Endothelial cell of umbilical vein (primary cell): ENCODE measurements at regions of chr7 and their contacts with region 1.

Region 1: GRCh38 chr7:101146-102046 is 91.0 kb upstream of the FAM20C start:
- DNase-seq: peak; percentile 67
- H3K4me3 ChIP-seq: no peak overlapping the region
- H3K27ac ChIP-seq: no peak overlapping the region
- H3K4me1 ChIP-seq: peaks cover 26% of the 10 kb centered on the region
- H3K27me3 ChIP-seq: peaks cover 0 to 4% of the 10 kb centered on the region in 2 experiments
- CTCF ChIP-seq: no peak
- POLR2A ChIP-seq: no peak

Region 2: GRCh38 chr7:89232-90019 is 12.0 kb before region 1 on chr7:
- CTCF ChIA-PET with region 1: no interaction called
- POLR2A ChIA-PET with region 1: no interaction called
- dilution Hi-C with region 1: no loop called
- intact Hi-C with region 1: loop called (anchors 1 kb)
- DNase-seq: peak; percentile 84
- H3K4me3 ChIP-seq: no peak overlapping the region
- H3K27ac ChIP-seq: peak overlapping the region; percentile 37
- H3K4me1 ChIP-seq: peaks cover 24% of the 10 kb centered on the region
- H3K27me3 ChIP-seq: no peaks in the 10 kb centered on the region
- CTCF ChIP-seq: no peak
- POLR2A ChIP-seq: no peak

Region 3: DNA sequence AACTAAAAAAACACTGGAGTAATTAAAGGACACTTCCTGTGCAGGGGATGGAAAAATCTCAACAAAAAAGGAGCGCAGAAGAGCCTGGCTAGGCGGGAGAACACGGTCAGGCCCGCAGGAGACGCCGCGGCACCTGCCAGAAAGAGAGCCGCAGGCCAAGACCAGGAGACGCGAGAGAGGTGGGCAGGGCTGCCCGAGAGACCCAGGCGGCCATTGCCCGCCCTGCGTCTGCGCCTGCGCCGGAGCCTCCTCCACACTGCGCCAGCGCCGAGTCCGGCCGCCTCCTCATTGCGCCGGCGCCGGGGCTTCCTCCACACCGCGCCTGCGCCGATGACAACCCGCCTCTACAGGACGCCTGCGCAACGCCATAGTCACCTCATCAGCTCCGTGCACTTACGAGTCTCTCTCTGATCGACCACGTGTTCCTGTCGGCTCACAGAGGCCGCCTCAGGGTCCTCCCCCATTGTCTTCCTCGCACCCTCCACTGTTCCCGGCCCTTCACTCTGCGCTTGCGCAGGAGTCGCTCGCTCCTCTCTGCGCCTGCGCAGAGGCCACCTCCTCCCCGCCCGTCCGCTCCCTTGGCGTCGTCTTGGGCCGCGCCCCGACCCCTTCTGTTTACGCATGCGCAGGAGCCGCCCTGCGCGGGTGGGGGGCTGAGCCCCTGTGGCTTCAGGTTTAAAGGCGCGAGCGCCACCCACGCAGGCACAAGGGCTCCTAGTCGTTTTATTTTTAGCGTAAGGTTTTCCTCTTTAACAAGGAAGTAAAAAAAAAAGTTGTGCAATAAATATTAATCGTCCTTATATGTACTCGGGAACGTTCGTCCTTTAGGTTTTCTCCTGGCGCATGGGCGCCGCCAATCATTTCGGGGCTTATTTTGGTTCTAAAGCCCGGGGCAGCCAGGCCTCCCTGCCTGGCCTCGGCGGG is 47.8 kb after region 1 on chr7:
- CTCF ChIA-PET with region 1: no interaction called
- POLR2A ChIA-PET with region 1: no interaction called
- dilution Hi-C with region 1: no loop called
- intact Hi-C with region 1: loop called (anchors 2 kb)
- DNase-seq: peak; percentile 99
- H3K4me3 ChIP-seq: peak overlapping the region; percentile 42 to 80 (median 44)
- H3K27ac ChIP-seq: peak overlapping the region; percentile 79
- H3K4me1 ChIP-seq: peaks cover 9% of the 10 kb centered on the region
- H3K27me3 ChIP-seq: no peaks in the 10 kb centered on the region
- CTCF ChIP-seq: no peak
- POLR2A ChIP-seq: peak; percentile 98

Region 4: DNA sequence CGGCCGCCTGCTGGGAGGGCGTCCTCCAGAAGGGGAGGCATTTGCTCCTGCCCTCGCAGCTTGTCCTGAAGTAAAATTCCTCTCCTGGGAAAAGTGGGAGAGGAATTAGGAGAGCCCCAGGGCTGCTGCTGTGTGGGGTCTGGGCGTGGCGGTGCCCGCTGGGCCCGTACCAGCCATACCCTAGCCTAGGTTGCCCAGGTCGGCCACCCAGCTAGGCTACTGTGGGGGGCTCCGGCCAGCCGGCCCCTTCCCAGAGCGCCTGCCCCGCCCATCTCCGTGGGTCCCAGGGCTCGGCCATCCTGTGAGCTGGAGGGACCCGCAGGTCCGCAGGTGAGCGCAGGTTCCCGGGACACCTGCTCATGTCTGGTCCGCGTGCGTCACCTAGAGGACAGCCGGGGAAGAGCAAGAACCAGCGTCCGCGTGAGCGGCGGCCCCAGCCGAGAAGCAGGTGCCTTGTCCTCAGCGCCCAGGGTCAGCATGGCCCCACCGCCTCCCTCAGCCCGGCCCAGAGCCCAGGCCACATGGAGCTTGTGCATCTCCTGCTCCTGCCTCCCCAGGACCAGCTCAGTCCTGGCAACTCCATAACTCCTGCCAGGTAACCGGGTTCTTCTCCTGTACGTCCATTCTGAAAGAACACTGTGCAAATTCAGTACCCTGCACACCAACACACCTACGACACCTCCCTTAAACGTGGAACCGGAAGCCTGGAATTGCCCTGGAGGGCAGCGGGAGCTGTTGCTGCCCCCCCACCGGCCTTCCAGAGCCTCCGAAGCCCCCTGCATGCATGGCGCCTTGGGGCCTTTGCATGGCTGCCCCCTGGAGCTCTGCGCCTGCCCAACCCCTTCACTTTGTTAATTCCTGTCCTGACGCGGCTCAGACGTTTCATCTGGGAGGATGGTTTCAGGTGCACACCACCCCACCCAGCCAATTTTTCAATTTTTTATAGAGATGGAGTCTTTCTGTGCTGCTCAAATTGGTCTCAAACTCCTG is 165.8 kb after region 1 on chr7:
- CTCF ChIA-PET with region 1: no interaction called
- POLR2A ChIA-PET with region 1: no interaction called
- dilution Hi-C with region 1: no loop called
- intact Hi-C with region 1: no loop called
- DNase-seq: no peak
- H3K4me3 ChIP-seq: no peak overlapping the region
- H3K27ac ChIP-seq: no peak overlapping the region
- H3K4me1 ChIP-seq: no peaks in the 10 kb centered on the region
- H3K27me3 ChIP-seq: no peaks in the 10 kb centered on the region
- CTCF ChIP-seq: peak in 1 of 2 donors; percentile 20
- POLR2A ChIP-seq: no peak